ENCODE measurements at regions of chr3 and their contacts with region 1.

Region 1: DNA sequence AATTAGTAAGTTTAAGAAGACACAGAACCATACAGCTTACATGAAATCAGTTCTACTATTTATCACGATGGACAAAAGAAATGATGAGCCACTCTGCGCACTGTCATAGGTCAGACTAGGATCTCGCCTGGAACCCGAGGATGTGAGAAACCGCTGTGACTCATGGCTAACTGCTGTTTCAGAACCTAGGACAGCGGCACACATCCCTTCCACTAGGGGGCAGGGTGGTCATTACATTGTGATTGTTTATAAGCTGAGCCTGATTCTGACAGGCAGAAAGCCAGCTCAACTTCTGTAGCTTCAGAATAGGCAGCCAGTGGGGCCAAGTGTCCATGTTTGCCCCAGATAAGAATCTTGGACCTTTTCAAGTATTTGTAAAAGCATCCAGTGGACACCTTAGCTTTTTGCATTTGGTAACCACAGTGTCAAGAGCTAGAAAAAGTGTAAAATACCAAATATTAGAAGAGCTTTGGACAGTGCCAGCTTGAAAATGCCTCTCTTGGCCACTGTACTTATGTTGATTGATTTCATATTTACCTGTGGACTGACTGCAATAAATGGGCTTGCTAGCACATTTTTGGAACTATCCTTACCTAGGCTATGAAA is 115.8 kb downstream of the KBTBD8 start:
- DNase-seq: peak; percentile 68
- H3K4me3 Mint-ChIP-seq: no peak overlapping the region
- H3K27ac Mint-ChIP-seq: no peak overlapping the region
- H3K4me1 Mint-ChIP-seq: peaks cover 5% of the 10 kb centered on the region
- H3K27me3 Mint-ChIP-seq: peaks cover 2% of the 10 kb centered on the region

Region 2: GRCh38 chr3:65729555-65729954 is 1384.3 kb before region 1 on chr3:
- intact Hi-C with region 1: no loop called
- DNase-seq: no peak
- H3K4me3 Mint-ChIP-seq: no peak overlapping the region
- H3K27ac Mint-ChIP-seq: no peak overlapping the region
- H3K4me1 Mint-ChIP-seq: no peaks in the 10 kb centered on the region
- H3K27me3 Mint-ChIP-seq: no peaks in the 10 kb centered on the region

Region 3: DNA sequence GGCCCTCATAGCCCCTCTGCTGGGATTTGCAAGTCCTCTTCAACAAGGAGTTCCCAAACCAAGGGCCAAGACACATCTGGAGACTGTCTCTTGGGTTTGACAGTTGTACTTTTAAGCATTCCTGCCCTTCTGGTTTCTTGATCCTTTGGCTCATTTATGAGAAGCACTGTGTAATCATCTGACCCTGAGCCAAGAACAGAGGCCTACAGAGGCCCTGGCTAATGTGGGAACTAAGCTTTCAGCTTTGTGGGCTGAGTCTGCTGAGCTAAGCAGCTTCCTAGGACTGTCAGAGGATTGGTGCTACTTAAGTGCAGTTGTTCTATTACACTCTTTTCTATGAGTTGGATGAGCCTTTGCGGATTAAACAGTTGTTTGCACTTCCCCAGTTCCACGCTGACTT is 62.5 kb after region 1 on chr3:
- intact Hi-C with region 1: no loop called
- DNase-seq: no peak
- H3K4me3 Mint-ChIP-seq: no peak overlapping the region
- H3K27ac Mint-ChIP-seq: no peak overlapping the region
- H3K4me1 Mint-ChIP-seq: no peaks in the 10 kb centered on the region
- H3K27me3 Mint-ChIP-seq: no peaks in the 10 kb centered on the region

Region 4: GRCh38 chr3:67790043-67790442 is 676.1 kb after region 1 on chr3:
- intact Hi-C with region 1: loop called (anchors 1 kb)
- DNase-seq: peak; percentile 23
- H3K4me3 Mint-ChIP-seq: no peak overlapping the region
- H3K27ac Mint-ChIP-seq: no peak overlapping the region
- H3K4me1 Mint-ChIP-seq: peaks cover 2% of the 10 kb centered on the region
- H3K27me3 Mint-ChIP-seq: peaks cover 8% of the 10 kb centered on the region

Region 5: GRCh38 chr3:68057637-68058320 is 943.9 kb after region 1 on chr3:
- intact Hi-C with region 1: no loop called
- DNase-seq: peak; percentile 27
- H3K4me3 Mint-ChIP-seq: peak overlapping the region; percentile 26
- H3K27ac Mint-ChIP-seq: no peak overlapping the region
- H3K4me1 Mint-ChIP-seq: peaks cover 16% of the 10 kb centered on the region
- H3K27me3 Mint-ChIP-seq: no peaks in the 10 kb centered on the region

Region 6: DNA sequence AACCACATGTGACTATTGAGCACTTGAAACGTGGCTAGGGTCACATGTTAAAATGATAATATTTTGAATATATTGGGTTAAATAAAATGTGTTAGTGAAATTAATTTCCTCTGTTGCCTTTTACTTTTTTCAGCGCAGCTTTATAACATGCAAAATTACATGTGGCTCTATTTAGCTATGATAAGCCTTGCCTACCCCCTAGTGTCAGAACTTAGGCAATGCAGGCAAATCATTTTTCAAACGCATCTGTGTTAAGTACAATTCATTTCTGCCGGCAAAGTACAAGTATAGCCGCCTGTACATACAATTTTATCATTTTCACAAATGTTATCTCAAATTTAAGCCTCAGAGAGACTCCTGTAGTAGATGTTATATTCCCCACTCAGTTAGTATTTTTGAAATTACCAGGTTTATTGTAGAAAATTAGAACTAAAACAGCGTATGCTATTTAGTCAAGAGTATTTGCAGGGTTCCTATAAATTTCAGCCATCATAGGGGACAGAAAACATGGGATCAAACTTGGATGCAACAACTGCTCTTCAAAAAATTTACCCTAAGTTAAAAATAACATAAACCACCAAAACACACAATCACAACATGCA is 1762.3 kb after region 1 on chr3:
- intact Hi-C with region 1: loop called (anchors 5 kb)
- DNase-seq: no peak
- H3K4me3 Mint-ChIP-seq: no peak overlapping the region
- H3K27ac Mint-ChIP-seq: no peak overlapping the region
- H3K4me1 Mint-ChIP-seq: no peaks in the 10 kb centered on the region
- H3K27me3 Mint-ChIP-seq: peaks cover 14% of the 10 kb centered on the region